ENCODE measurements at regions of chr1 and their contacts with region 1.

Region 1: GRCh38 chr1:145858894-145859490 is at the start of gene PIAS3:
- DNase-seq: peak; percentile 67 to 93 (median 77)
- ATAC-seq: peak; percentile 93
- H3K4me3 ChIP-seq: peak within 1 kb of the TSS; percentile 88
- H3K4me3 Mint-ChIP-seq: peak within 1 kb of the TSS; percentile 96 to 99 (median 98)
- H3K27ac ChIP-seq: peak within 1 kb of the TSS; percentile 80
- H3K27ac Mint-ChIP-seq: peak within 1 kb of the TSS; percentile 84 to 96 (median 91)
- H3K4me1 ChIP-seq: peaks cover 7 to 10% of the 10 kb centered on the region in 2 donors
- H3K4me1 Mint-ChIP-seq: peaks cover 10 to 22% (median 12%) of the 10 kb centered on the region in 7 donors
- H3K27me3 ChIP-seq: no peaks in the 10 kb centered on the region
- H3K27me3 Mint-ChIP-seq: peaks cover 0 to 11% (median 0%) of the 10 kb centered on the region in 5 donors
- total RNA-seq, gene PIAS3: 21.4 to 28.3 (median 23.0) TPM

Region 2: GRCh38 chr1:145750426-145750825 is 108.6 kb before region 1 on chr1:
- CTCF ChIA-PET with region 1: no interaction called
- POLR2A ChIA-PET with region 1: no interaction called
- intact Hi-C with region 1: no loop called
- DNase-seq: no peak
- ATAC-seq: no peak
- H3K4me3 ChIP-seq: no peak overlapping the region
- H3K4me3 Mint-ChIP-seq: no peak overlapping the region
- H3K27ac ChIP-seq: no peak overlapping the region
- H3K27ac Mint-ChIP-seq: no peak overlapping the region
- H3K4me1 ChIP-seq: no peaks in the 10 kb centered on the region
- H3K4me1 Mint-ChIP-seq: peaks cover 0 to 6% (median 0%) of the 10 kb centered on the region in 7 donors
- H3K27me3 ChIP-seq: no peaks in the 10 kb centered on the region
- H3K27me3 Mint-ChIP-seq: no peaks in the 10 kb centered on the region

Region 3: GRCh38 chr1:145782166-145783099 is 76.6 kb before region 1 on chr1:
- CTCF ChIA-PET with region 1: no interaction called
- POLR2A ChIA-PET with region 1: no interaction called
- intact Hi-C with region 1: no loop called
- DNase-seq: no peak
- ATAC-seq: no peak
- H3K4me3 ChIP-seq: no peak overlapping the region
- H3K4me3 Mint-ChIP-seq: no peak overlapping the region
- H3K27ac ChIP-seq: no peak overlapping the region
- H3K27ac Mint-ChIP-seq: no peak overlapping the region
- H3K4me1 ChIP-seq: peaks cover 0 to 5% of the 10 kb centered on the region in 2 donors
- H3K4me1 Mint-ChIP-seq: peaks cover 14 to 27% (median 24%) of the 10 kb centered on the region in 7 donors
- H3K27me3 ChIP-seq: no peaks in the 10 kb centered on the region
- H3K27me3 Mint-ChIP-seq: no peaks in the 10 kb centered on the region

Region 4: GRCh38 chr1:145871994-145872924 is 13.3 kb after region 1 on chr1:
- CTCF ChIA-PET with region 1: interaction called, 3 read pairs
- POLR2A ChIA-PET with region 1: interaction called, 32 read pairs
- intact Hi-C with region 1: loop called in 1 of 2 experiments (anchors 2 kb)
- DNase-seq: peak in 8 of 9 donors; percentile 21 to 54 (median 44)
- ATAC-seq: peak; percentile 87
- H3K4me3 ChIP-seq: peak overlapping the region; percentile 55
- H3K4me3 Mint-ChIP-seq: peak overlapping the region; percentile 75 to 87 (median 82)
- H3K27ac ChIP-seq: peak overlapping the region; percentile 46
- H3K27ac Mint-ChIP-seq: peak overlapping the region; percentile 39 to 92 (median 76)
- H3K4me1 ChIP-seq: peaks cover 5 to 6% of the 10 kb centered on the region in 2 donors
- H3K4me1 Mint-ChIP-seq: peaks cover 16 to 18% (median 17%) of the 10 kb centered on the region in 7 donors
- H3K27me3 ChIP-seq: no peaks in the 10 kb centered on the region
- H3K27me3 Mint-ChIP-seq: peaks cover 0 to 42% (median 0%) of the 10 kb centered on the region in 5 donors

Region 5: DNA sequence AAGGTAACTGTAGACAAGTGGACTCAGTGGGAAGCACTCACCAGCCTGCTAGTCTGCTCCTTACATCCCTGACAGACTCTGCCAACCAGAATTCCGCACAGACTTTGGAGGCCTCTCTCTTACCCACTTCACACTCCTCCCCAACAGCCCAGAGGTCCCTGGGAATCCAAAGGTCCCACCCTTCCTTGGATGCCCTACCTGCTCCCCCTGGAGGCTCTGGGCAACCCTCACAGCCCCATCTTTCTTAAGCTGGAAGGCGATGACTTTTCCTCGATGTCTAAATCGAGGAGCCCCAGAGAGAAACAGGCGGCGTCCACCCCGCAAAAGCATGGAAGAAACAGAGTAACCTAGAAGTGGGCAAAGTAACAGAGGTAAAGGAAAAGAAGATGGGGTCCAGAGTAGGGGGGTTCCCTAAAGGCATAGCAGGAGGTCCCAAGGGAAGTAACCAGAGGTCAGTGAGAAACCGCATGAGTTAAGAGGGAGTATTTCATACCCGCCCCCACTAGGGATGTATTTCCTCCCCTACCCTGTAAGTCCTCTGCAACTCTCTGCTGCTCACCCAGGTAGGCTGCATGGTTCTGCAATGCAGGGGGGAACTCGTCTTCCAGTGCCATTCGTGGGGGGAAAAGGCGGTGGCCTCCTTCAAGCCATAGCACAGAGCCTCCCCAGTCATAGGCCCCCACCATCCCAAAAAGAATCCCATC is 42.5 kb after region 1 on chr1:
- CTCF ChIA-PET with region 1: no interaction called
- POLR2A ChIA-PET with region 1: no interaction called
- intact Hi-C with region 1: no loop called
- DNase-seq: no peak
- ATAC-seq: no peak
- H3K4me3 ChIP-seq: no peak overlapping the region
- H3K4me3 Mint-ChIP-seq: no peak overlapping the region
- H3K27ac ChIP-seq: no peak overlapping the region
- H3K27ac Mint-ChIP-seq: peak overlapping the region in 1 of 9 donors; percentile 6
- H3K4me1 ChIP-seq: no peaks in the 10 kb centered on the region
- H3K4me1 Mint-ChIP-seq: no peaks in the 10 kb centered on the region
- H3K27me3 ChIP-seq: no peaks in the 10 kb centered on the region
- H3K27me3 Mint-ChIP-seq: no peaks in the 10 kb centered on the region

Region 6: GRCh38 chr1:145918144-145918992 is 59.4 kb after region 1 on chr1 and contains the start of gene PEX11B:
- CTCF ChIA-PET with region 1: no interaction called
- POLR2A ChIA-PET with region 1: interaction called, 18 read pairs
- intact Hi-C with region 1: loop called (anchors 1 kb)
- DNase-seq: peak; percentile 80 to 95 (median 93)
- ATAC-seq: peak; percentile 94
- H3K4me3 ChIP-seq: peak within 1 kb of the TSS; percentile 82
- H3K4me3 Mint-ChIP-seq: peak within 1 kb of the TSS; percentile 92 to 98 (median 96)
- H3K27ac ChIP-seq: peak within 1 kb of the TSS; percentile 83
- H3K27ac Mint-ChIP-seq: peak within 1 kb of the TSS; percentile 93 to 98 (median 96)
- H3K4me1 ChIP-seq: peaks cover 21 to 23% of the 10 kb centered on the region in 2 donors
- H3K4me1 Mint-ChIP-seq: peaks cover 27 to 75% (median 61%) of the 10 kb centered on the region in 7 donors
- H3K27me3 ChIP-seq: no peaks in the 10 kb centered on the region
- H3K27me3 Mint-ChIP-seq: no peaks in the 10 kb centered on the region
- total RNA-seq, gene PEX11B: 16.4 to 40.4 (median 37.7) TPM

Region 7: DNA sequence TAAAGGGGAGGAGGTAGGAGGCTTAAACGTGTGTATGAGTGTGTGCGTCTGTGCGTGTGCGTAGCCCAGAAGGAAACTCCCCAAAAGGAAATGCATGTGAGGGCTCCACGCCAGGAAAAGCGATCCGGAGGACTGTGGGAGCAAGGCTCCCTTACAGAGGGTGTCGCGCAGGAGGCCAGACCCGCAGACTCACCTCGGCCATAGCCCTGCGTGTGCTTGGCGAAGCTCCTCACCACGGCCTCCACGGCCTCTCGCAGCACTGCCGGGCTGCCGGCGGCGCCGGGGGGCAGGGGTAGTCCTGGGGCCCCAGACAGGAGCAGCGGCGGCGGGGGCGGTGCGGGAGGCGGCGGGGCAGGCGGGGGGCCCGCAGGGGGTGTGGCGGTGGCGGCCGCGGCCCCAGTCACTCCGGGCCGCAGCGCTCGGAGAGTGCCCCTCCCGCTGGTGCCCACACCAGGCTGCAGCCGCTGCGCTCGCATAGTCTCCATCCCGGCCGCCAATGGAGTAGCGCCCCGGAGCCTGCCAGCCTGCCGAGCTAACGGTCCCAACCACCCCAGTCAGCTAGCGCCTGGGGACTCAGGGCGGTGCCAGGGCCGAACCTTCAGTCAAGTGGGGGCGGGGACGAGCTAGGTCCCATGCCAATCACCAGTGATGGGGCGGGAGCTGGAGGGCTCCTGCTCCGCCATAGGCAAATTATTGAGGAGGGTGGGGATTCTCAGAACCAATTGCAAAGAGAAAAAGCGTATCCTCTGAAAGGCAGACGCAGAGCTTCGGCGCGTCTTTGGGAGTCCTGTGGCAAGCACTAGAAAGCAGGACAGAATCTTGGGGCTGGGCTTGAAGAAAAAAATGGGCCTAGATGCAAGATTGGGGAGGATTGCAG is 98.7 kb after region 1 on chr1 and contains the start of gene LIX1L:
- CTCF ChIA-PET with region 1: interaction called, 6 read pairs
- POLR2A ChIA-PET with region 1: interaction called, 25 read pairs
- intact Hi-C with region 1: loop called (anchors 1 kb)
- DNase-seq: peak; percentile 79 to 97 (median 94)
- ATAC-seq: peak; percentile 95
- H3K4me3 ChIP-seq: peak within 1 kb of the TSS; percentile 70
- H3K4me3 Mint-ChIP-seq: peak within 1 kb of the TSS; percentile 88 to 99 (median 98)
- H3K27ac ChIP-seq: peak within 1 kb of the TSS; percentile 94
- H3K27ac Mint-ChIP-seq: peak within 1 kb of the TSS; percentile 87 to 98 (median 92)
- H3K4me1 ChIP-seq: peaks cover 35 to 57% of the 10 kb centered on the region in 2 donors
- H3K4me1 Mint-ChIP-seq: peaks cover 59 to 70% (median 66%) of the 10 kb centered on the region in 7 donors
- H3K27me3 ChIP-seq: no peaks in the 10 kb centered on the region
- H3K27me3 Mint-ChIP-seq: peaks cover 0 to 4% (median 0%) of the 10 kb centered on the region in 5 donors
- total RNA-seq, gene LIX1L: 31.6 to 59.2 (median 47.6) TPM

Region 8: GRCh38 chr1:145996433-145997015 is 137.5 kb after region 1 on chr1 and contains the start of gene TXNIP:
- CTCF ChIA-PET with region 1: no interaction called
- POLR2A ChIA-PET with region 1: interaction called, 24 read pairs
- intact Hi-C with region 1: no loop called
- DNase-seq: peak; percentile 66 to 97 (median 94)
- ATAC-seq: peak; percentile 92
- H3K4me3 ChIP-seq: peak within 1 kb of the TSS; percentile 97
- H3K4me3 Mint-ChIP-seq: peak within 1 kb of the TSS; percentile 89 to 99 (median 98)
- H3K27ac ChIP-seq: peak within 1 kb of the TSS; percentile 91
- H3K27ac Mint-ChIP-seq: peak within 1 kb of the TSS; percentile 94 to 99 (median 97)
- H3K4me1 ChIP-seq: peaks cover 41 to 48% of the 10 kb centered on the region in 2 donors
- H3K4me1 Mint-ChIP-seq: peaks cover 43 to 72% (median 54%) of the 10 kb centered on the region in 7 donors
- H3K27me3 ChIP-seq: no peaks in the 10 kb centered on the region
- H3K27me3 Mint-ChIP-seq: peaks cover 0 to 3% (median 0%) of the 10 kb centered on the region in 5 donors
- total RNA-seq, gene TXNIP: 498 to 1,101 (median 659) TPM